ENCODE measurements at regions of chr1 and their contacts with region 1.

Region 1: DNA sequence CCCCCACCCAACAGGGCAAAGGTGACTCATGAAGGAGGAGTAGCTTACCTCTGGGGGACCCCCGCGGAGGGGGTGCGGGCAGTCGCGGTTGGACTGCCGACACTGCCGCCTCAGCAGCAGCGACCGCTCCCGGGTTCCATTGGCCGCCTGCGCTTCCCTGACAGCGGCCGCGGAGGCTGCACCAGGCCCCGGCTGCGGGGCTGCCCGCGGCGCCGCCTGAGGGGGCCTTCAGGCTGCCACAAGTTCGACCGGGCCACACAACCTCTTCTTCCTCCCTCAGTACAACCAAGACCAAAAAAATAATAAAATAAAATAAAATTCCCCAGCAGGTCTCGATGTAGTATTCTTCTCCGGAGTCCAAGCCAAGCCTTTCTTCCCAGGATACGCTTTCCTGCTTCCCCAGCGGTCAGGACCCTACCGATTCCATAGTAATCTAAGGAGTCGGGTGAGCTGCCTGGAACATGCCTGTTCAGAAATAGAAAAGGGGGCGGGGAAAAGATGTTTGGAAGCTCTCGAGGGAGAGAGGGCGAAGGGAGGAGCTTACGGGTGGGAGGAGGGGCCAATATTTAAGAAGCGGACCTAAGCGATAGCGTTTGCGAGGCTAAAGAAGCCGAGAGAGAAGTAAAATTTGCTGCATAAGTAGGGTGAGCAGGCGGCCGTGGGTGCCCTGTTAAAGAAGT is at the start of gene PI4KB:
- DNase-seq: peak; percentile 96
- ATAC-seq: peak; percentile 97
- H3K4me3 Mint-ChIP-seq: peak within 1 kb of the TSS; percentile 86
- H3K27ac Mint-ChIP-seq: peak within 1 kb of the TSS; percentile 97
- H3K4me1 Mint-ChIP-seq: peaks cover 34% of the 10 kb centered on the region
- H3K27me3 Mint-ChIP-seq: no peaks in the 10 kb centered on the region
- total RNA-seq, gene PI4KB: 56.0 to 70.2 TPM

Region 2: GRCh38 chr1:151059078-151059907 is 268.1 kb before region 1 on chr1 and contains the start of gene CDC42SE1:
- CTCF ChIA-PET with region 1: no interaction called
- POLR2A ChIA-PET with region 1: no interaction called
- DNase-seq: peak; percentile 91
- ATAC-seq: peak; percentile 78
- H3K4me3 Mint-ChIP-seq: peak within 1 kb of the TSS; percentile 94
- H3K27ac Mint-ChIP-seq: peak within 1 kb of the TSS; percentile 96
- H3K4me1 Mint-ChIP-seq: peaks cover 56% of the 10 kb centered on the region
- H3K27me3 Mint-ChIP-seq: no peaks in the 10 kb centered on the region
- total RNA-seq, gene CDC42SE1: 238 to 245 TPM

Region 3: DNA sequence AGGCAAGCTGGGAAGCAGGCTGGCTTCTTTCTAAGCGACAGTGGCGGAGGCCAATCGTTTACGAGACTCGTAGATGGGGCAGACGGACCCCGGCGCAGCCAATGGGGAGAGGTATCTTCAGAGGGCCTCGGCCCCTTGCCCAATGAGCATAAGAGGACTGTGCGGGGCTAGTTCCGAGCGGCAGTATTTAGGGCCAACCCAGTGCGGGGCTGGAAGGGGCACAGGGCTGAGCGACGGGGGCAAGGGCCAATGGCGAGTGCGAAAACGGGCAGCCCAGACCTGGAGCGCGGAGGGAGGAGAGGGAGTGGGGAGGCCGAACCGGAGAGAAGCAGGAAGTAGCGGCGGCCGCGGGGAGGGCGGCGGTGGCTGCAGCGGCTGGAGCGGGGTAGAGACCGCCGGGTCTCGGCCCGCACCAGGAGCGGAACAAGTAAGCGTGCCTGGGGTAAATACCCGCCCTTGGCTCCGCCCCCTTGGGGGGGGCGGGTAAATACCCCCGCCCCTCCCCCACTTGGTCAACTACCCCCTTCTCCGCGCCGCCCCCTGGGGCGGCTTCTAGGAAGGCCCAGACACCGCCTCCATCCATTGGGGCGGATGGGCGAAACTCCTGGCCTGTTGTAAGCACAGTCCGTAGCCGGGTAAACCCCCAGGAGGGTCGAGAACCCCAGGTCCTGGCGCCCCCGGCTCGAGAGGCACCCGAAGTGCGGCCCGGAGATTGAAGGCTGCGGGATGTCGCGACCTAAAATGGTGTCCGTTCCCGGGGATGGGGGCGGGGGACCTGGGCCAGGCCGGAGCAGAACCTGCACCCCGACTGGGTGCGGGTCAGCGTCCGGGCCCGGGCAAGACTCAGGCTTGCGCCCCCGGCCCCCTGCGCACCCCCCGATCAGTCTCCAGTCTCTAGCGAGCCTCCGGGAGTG is 45.1 kb before region 1 on chr1 and contains the start of gene ZNF687:
- CTCF ChIA-PET with region 1: interaction called, 9 read pairs
- POLR2A ChIA-PET with region 1: interaction called, 29 read pairs
- DNase-seq: peak; percentile 99
- ATAC-seq: peak; percentile 94
- H3K4me3 Mint-ChIP-seq: peak within 1 kb of the TSS; percentile 98
- H3K27ac Mint-ChIP-seq: peak within 1 kb of the TSS; percentile 100
- H3K4me1 Mint-ChIP-seq: peaks cover 19% of the 10 kb centered on the region
- H3K27me3 Mint-ChIP-seq: no peaks in the 10 kb centered on the region
- total RNA-seq, gene ZNF687: 25.5 to 26.6 TPM

Region 4: GRCh38 chr1:151311589-151312331 is 15.6 kb before region 1 on chr1:
- CTCF ChIA-PET with region 1: interaction called, 17 read pairs
- POLR2A ChIA-PET with region 1: interaction called, 17 read pairs
- DNase-seq: peak; percentile 61
- ATAC-seq: peak; percentile 80
- H3K4me3 Mint-ChIP-seq: no peak overlapping the region
- H3K27ac Mint-ChIP-seq: peak overlapping the region; percentile 43
- H3K4me1 Mint-ChIP-seq: peaks cover 14% of the 10 kb centered on the region
- H3K27me3 Mint-ChIP-seq: no peaks in the 10 kb centered on the region

Region 5: DNA sequence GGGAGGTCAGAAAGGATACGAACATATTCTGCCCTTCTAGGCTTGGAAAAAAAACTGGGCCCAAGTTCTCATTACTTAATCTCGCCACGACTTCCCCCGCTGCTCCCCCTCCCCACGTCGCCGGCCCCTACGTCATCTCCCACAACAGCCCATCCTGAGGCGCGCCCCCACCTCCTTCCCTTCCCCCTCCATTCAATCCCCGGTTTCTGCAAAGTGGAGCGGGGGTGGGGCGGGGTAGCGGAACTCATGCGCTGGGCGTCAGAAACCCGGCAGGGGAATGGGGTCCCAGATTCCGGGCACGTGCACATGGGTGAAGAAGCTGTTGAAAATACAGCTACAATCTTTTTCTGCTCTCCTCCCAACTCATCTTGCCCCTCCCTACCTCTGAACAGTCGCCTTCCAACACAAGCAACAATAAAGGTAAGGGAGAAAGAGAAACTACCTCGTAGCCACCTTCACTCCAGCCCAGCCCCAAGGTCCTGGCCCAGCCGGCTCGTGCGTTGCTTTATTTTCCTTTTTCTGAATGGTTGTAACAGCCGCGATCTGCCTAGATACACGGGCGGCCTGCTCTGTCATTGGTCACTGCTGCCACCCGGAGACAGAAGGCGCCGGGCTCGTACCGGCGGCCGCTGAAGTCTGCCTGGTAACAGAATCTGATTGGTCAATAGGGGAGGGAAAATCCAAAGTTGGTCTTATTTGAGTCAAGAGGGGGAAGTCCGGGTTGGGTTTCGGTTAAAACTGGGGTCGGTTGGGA is 19.6 kb after region 1 on chr1 and contains the start of gene RFX5:
- CTCF ChIA-PET with region 1: interaction called, 7 read pairs
- POLR2A ChIA-PET with region 1: interaction called, 10 read pairs
- DNase-seq: peak; percentile 97
- ATAC-seq: peak; percentile 99
- H3K4me3 Mint-ChIP-seq: peak within 1 kb of the TSS; percentile 84
- H3K27ac Mint-ChIP-seq: peak within 1 kb of the TSS; percentile 92
- H3K4me1 Mint-ChIP-seq: peaks cover 24% of the 10 kb centered on the region
- H3K27me3 Mint-ChIP-seq: no peaks in the 10 kb centered on the region
- total RNA-seq, gene RFX5: 59.3 to 63.9 TPM

Region 6: DNA sequence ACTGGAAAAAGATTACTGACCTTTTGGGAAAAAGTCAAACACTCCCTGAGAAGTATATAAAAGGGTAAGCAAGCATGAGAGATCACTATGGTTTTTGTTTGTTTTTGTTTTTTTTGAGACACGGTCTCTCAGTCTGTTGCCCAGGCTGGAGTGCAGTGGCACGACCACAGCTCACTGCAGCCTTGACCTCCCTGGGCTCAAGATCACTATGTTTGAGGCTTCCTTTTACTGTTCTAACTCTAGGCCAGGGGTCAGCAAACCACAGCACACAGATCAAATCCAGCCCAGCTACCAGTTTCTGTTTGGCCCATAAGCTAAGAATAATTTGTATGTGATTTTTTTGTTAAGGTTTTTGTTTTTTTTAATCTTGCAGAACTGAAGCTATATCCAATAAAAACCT is 97.7 kb after region 1 on chr1:
- CTCF ChIA-PET with region 1: no interaction called
- POLR2A ChIA-PET with region 1: no interaction called
- DNase-seq: no peak
- ATAC-seq: no peak
- H3K4me3 Mint-ChIP-seq: no peak overlapping the region
- H3K27ac Mint-ChIP-seq: no peak overlapping the region
- H3K4me1 Mint-ChIP-seq: no peaks in the 10 kb centered on the region
- H3K27me3 Mint-ChIP-seq: no peaks in the 10 kb centered on the region

Region 7: GRCh38 chr1:151435160-151435559 is 107.8 kb after region 1 on chr1:
- CTCF ChIA-PET with region 1: no interaction called
- POLR2A ChIA-PET with region 1: no interaction called
- DNase-seq: no peak
- ATAC-seq: no peak
- H3K4me3 Mint-ChIP-seq: no peak overlapping the region
- H3K27ac Mint-ChIP-seq: no peak overlapping the region
- H3K4me1 Mint-ChIP-seq: peaks cover 20% of the 10 kb centered on the region
- H3K27me3 Mint-ChIP-seq: no peaks in the 10 kb centered on the region